Activated CD4-positive, alpha-beta memory T cell treated with anti-CD3 and anti-CD28 coated beads for 36 hours (primary cell): ENCODE measurements at regions of chr17 and their contacts with region 1.

Region 1: DNA sequence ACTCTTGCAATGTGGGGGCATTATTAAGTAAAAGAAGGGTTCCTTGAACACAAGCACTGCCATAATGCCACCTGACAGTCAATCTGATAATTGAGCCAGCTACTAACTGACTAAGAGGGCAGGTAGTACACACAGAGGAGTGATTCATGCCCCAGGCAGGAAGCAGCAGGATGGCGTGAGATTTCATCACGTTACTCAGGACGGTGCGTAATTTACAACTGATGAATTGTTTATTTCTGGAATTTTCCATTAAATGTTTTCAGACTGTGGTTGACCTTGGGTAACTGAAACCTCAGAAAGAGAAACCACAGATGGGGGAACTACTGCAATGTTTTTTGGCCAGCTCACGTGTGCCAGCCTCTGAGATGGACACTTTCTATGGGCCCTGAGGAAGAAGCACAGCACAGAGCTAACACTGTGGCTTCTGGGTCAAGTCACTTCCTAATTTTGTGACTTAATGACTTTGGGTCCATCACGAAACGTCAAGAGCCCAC is 46.7 kb downstream of the C17orf67 start:
- DNase-seq: peak; percentile 83
- H3K4me3 Mint-ChIP-seq: peak overlapping the region; percentile 33
- H3K27ac Mint-ChIP-seq: peak overlapping the region; percentile 88
- H3K4me1 Mint-ChIP-seq: peaks cover 33% of the 10 kb centered on the region
- H3K27me3 Mint-ChIP-seq: no peaks in the 10 kb centered on the region

Region 2: GRCh38 chr17:56737366-56738161 is 49.5 kb before region 1 on chr17:
- CTCF ChIA-PET with region 1: no interaction called
- POLR2A ChIA-PET with region 1: no interaction called
- intact Hi-C with region 1: no loop called
- DNase-seq: no peak
- H3K4me3 Mint-ChIP-seq: no peak overlapping the region
- H3K27ac Mint-ChIP-seq: no peak overlapping the region
- H3K4me1 Mint-ChIP-seq: no peaks in the 10 kb centered on the region
- H3K27me3 Mint-ChIP-seq: peaks cover 6% of the 10 kb centered on the region

Region 3: GRCh38 chr17:56918916-56919639 is 132.0 kb after region 1 on chr17:
- CTCF ChIA-PET with region 1: no interaction called
- POLR2A ChIA-PET with region 1: interaction called, 4 read pairs
- intact Hi-C with region 1: loop called (anchors 1 kb)
- DNase-seq: no peak
- H3K4me3 Mint-ChIP-seq: no peak overlapping the region
- H3K27ac Mint-ChIP-seq: peak overlapping the region; percentile 46
- H3K4me1 Mint-ChIP-seq: peaks cover 42% of the 10 kb centered on the region
- H3K27me3 Mint-ChIP-seq: no peaks in the 10 kb centered on the region